CD14-positive monocyte (primary cell): ENCODE measurements at regions of chr19 and their contacts with region 1.

Region 1: DNA sequence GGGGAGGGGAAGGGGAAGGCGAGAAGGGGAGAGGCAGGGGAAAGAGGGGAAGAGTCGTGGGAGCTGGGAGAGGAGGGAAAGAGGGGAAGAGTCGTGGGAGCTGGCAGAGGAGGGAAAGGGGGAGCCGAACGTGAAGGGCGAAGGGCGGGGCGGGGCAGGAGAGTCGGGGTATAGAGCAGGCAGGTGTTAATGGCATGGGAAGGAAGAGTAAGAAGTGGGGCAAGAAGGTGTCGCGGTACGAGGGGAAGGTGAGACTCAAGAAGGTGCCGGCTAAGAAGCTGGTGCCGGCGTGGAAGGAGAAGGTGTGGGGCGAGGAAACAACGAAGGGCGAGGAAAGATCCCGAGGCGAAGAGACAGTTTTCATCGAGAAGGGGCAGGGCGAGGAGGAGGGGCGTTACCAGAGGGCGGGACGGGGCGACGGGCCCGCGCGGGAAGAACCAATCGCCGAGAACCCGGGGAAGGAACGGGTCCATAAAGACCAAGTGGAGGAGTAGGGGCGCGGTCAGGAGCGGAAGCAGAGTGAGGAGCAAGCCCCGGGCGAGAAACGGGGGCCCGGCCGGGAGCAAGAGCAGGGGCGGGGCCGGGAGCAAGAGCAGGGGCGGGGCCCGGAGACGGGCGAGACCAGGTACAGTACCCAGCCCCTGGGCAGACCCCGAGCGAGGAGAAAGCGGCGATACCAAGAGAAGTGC is 463 bp downstream of the CATSPERG start:
- DNase-seq: peak; percentile 88 to 95 (median 89)
- H3K4me3 ChIP-seq: peak overlapping the region; percentile 74 to 100 (median 79)
- H3K4me3 Mint-ChIP-seq: peak overlapping the region; percentile 93 to 98
- H3K27ac ChIP-seq: peak overlapping the region; percentile 89 to 99
- H3K27ac Mint-ChIP-seq: peak overlapping the region; percentile 98 to 100 (median 100)
- H3K4me1 ChIP-seq: peaks cover 6 to 12% of the 10 kb centered on the region in 2 donors
- H3K4me1 Mint-ChIP-seq: peaks cover 6% of the 10 kb centered on the region
- H3K27me3 ChIP-seq: no peaks in the 10 kb centered on the region
- H3K27me3 Mint-ChIP-seq: peaks cover 0 to 4% (median 0%) of the 10 kb centered on the region in 3 donors
- CTCF ChIP-seq: no peak

Region 2: GRCh38 chr19:38229585-38230073 is 106.5 kb before region 1 on chr19:
- intact Hi-C with region 1: loop called (anchors 2 kb)
- DNase-seq: peak; percentile 1 to 21 (median 9)
- H3K4me3 ChIP-seq: no peak overlapping the region
- H3K4me3 Mint-ChIP-seq: peak overlapping the region in 1 of 2 donors; percentile 69
- H3K27ac ChIP-seq: no peak overlapping the region
- H3K27ac Mint-ChIP-seq: no peak overlapping the region
- H3K4me1 ChIP-seq: peaks cover 6 to 9% of the 10 kb centered on the region in 2 donors
- H3K4me1 Mint-ChIP-seq: peaks cover 4% of the 10 kb centered on the region
- H3K27me3 ChIP-seq: peaks cover 42 to 69% of the 10 kb centered on the region in 2 donors
- H3K27me3 Mint-ChIP-seq: peaks cover 55 to 75% (median 64%) of the 10 kb centered on the region in 3 donors
- CTCF ChIP-seq: no peak

Region 3: GRCh38 chr19:38245826-38246498 is 90.1 kb before region 1 on chr19:
- intact Hi-C with region 1: loop called (anchors 1 to 2 kb)
- DNase-seq: no peak
- H3K4me3 ChIP-seq: no peak overlapping the region
- H3K4me3 Mint-ChIP-seq: no peak overlapping the region
- H3K27ac ChIP-seq: no peak overlapping the region
- H3K27ac Mint-ChIP-seq: no peak overlapping the region
- H3K4me1 ChIP-seq: no peaks in the 10 kb centered on the region
- H3K4me1 Mint-ChIP-seq: peaks cover 8% of the 10 kb centered on the region
- H3K27me3 ChIP-seq: no peaks in the 10 kb centered on the region
- H3K27me3 Mint-ChIP-seq: peaks cover 4 to 15% (median 5%) of the 10 kb centered on the region in 3 donors
- CTCF ChIP-seq: no peak

Region 4: DNA sequence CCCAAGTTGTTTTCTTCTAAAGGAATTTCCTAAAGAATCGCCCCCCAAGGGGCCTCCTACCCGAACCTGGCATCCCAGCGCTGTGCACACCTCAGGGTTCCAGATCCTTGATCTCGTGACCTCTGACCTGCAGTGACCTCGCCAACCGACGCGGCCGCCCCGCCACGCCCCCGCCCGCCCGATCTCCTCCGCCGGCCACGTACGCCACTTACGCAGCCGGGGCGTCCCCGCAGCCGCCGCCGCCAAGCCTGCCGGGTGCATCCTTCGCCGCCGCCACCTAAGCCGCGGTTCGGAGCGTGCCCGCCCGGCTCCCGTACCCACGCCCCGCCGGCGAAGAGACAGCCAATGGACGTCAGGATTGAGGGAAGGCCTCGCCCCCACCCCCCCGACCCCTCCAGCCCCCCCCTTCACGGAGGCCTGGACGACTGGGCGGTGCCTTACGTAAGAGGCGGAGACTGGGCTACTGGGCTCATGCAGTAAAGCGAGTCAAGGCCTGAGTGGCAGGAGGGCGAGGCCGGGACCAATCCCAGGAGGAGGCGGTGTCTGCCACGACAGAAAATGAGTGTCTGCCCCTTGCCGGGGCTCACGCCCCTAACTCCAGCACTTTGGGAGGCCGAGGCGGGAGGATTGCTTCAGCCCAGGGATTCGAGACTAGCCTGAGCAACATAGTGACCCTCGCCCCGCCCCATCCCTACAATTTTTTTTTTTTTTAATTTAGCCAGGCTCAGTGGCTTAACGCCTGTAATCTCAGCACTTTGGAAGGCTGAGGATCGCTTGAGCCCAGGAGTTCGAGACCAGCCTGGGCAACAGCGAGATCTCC is 20.2 kb before region 1 on chr19 and contains the start of gene YIF1B:
- intact Hi-C with region 1: loop called in 1 of 2 experiments (anchors 2 kb)
- DNase-seq: peak; percentile 94 to 97 (median 95)
- H3K4me3 ChIP-seq: peak within 1 kb of the TSS; percentile 44 to 85 (median 61)
- H3K4me3 Mint-ChIP-seq: peak within 1 kb of the TSS; percentile 77 to 91
- H3K27ac ChIP-seq: peak within 1 kb of the TSS; percentile 91 to 92
- H3K27ac Mint-ChIP-seq: peak within 1 kb of the TSS; percentile 92 to 98 (median 95)
- H3K4me1 ChIP-seq: peaks cover 69 to 85% of the 10 kb centered on the region in 2 donors
- H3K4me1 Mint-ChIP-seq: peaks cover 68% of the 10 kb centered on the region
- H3K27me3 ChIP-seq: no peaks in the 10 kb centered on the region
- H3K27me3 Mint-ChIP-seq: peaks cover 2 to 4% (median 3%) of the 10 kb centered on the region in 3 donors
- CTCF ChIP-seq: no peak
- polyA plus RNA-seq, gene YIF1B: 79.4 to 90.5 (median 86.1) TPM

Region 5: GRCh38 chr19:38374429-38375176 is 38.5 kb after region 1 on chr19 and contains the start of gene PSMD8:
- intact Hi-C with region 1: loop called (anchors 1 kb)
- DNase-seq: peak; percentile 100
- H3K4me3 ChIP-seq: peak within 1 kb of the TSS; percentile 62 to 95 (median 75)
- H3K4me3 Mint-ChIP-seq: peak within 1 kb of the TSS; percentile 99 to 100
- H3K27ac ChIP-seq: peak within 1 kb of the TSS; percentile 68 to 92
- H3K27ac Mint-ChIP-seq: peak within 1 kb of the TSS; percentile 97 to 99 (median 98)
- H3K4me1 ChIP-seq: peaks cover 18 to 23% of the 10 kb centered on the region in 2 donors
- H3K4me1 Mint-ChIP-seq: peaks cover 24% of the 10 kb centered on the region
- H3K27me3 ChIP-seq: no peaks in the 10 kb centered on the region
- H3K27me3 Mint-ChIP-seq: peaks cover 5 to 13% (median 8%) of the 10 kb centered on the region in 3 donors
- CTCF ChIP-seq: no peak
- polyA plus RNA-seq, gene PSMD8: 148 to 207 (median 179) TPM

Region 6: DNA sequence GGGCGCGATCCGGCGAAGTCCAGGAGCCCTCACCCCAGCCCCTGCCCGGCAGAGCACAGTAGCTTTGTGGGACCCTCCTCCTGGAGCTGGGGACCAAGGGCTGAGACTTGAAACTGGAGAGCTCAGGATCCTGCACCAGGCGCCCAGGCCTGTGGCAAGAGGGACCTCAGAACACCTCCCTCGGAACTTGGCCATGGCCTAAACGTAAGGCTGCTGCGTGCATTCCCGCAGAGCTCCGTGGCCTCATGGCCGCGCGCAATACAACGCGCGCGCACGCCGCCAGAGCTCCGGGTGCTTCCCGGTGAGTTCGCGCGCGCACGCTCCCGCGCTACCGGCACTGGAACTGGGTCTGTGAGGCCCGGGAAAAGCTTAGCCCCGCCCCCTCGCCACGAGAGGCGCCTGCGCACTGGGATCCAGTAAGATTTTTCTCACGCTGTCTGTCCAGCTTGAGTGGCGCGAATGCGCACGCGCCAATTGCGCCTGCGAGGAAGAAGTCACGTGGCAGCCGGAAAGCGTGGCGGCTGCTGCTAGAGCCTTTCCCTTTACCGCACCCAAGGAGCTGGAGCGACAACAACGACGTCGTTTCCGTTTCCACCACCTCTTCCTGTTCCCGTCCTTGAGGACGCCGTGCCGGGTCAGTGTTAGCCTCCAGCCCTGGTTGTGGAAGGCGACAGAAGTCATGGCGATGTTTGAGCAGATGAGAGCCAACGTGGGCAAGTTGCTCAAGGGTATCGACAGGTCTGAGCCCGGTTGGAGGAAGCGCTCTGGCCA is 282.7 kb after region 1 on chr19 and contains the start of gene EIF3K:
- intact Hi-C with region 1: loop called in 1 of 2 experiments (anchors 2 kb)
- DNase-seq: peak; percentile 99 to 100 (median 99)
- H3K4me3 ChIP-seq: peak within 1 kb of the TSS; percentile 87 to 100 (median 99)
- H3K4me3 Mint-ChIP-seq: peak within 1 kb of the TSS; percentile 99 to 100
- H3K27ac ChIP-seq: peak within 1 kb of the TSS; percentile 83 to 97
- H3K27ac Mint-ChIP-seq: peak within 1 kb of the TSS; percentile 97 to 100 (median 99)
- H3K4me1 ChIP-seq: peaks cover 35 to 44% of the 10 kb centered on the region in 2 donors
- H3K4me1 Mint-ChIP-seq: peaks cover 31% of the 10 kb centered on the region
- H3K27me3 ChIP-seq: no peaks in the 10 kb centered on the region
- H3K27me3 Mint-ChIP-seq: peaks cover 0 to 2% (median 1%) of the 10 kb centered on the region in 3 donors
- CTCF ChIP-seq: no peak
- polyA plus RNA-seq, gene EIF3K: 326 to 1,088 (median 381) TPM